ENCODE measurements at regions of chr3 and their contacts with region 1.

Region 1: GRCh38 chr3:184314363-184314699 is at the start of gene EIF4G1:
- DNase-seq: peak; percentile 94
- H3K4me3 ChIP-seq: peak within 1 kb of the TSS; percentile 97
- H3K27ac ChIP-seq: peak within 1 kb of the TSS; percentile 62
- H3K4me1 ChIP-seq: peaks cover 25% of the 10 kb centered on the region
- CTCF ChIP-seq: no peak
- total RNA-seq, gene EIF4G1: 245 and 293 TPM in 2 replicates

Region 2: GRCh38 chr3:184154885-184155643 is 159.3 kb before region 1 on chr3 and contains the start of gene DVL3:
- CTCF ChIA-PET with region 1: no interaction called
- POLR2A ChIA-PET with region 1: no interaction called
- intact Hi-C with region 1: loop called (anchors 5 kb)
- DNase-seq: peak; percentile 74
- H3K4me3 ChIP-seq: peak within 1 kb of the TSS; percentile 92
- H3K27ac ChIP-seq: peak within 1 kb of the TSS; percentile 52
- H3K4me1 ChIP-seq: peaks cover 23% of the 10 kb centered on the region
- CTCF ChIP-seq: no peak
- total RNA-seq, gene DVL3: 38.5 and 41.3 TPM in 2 replicates

Region 3: DNA sequence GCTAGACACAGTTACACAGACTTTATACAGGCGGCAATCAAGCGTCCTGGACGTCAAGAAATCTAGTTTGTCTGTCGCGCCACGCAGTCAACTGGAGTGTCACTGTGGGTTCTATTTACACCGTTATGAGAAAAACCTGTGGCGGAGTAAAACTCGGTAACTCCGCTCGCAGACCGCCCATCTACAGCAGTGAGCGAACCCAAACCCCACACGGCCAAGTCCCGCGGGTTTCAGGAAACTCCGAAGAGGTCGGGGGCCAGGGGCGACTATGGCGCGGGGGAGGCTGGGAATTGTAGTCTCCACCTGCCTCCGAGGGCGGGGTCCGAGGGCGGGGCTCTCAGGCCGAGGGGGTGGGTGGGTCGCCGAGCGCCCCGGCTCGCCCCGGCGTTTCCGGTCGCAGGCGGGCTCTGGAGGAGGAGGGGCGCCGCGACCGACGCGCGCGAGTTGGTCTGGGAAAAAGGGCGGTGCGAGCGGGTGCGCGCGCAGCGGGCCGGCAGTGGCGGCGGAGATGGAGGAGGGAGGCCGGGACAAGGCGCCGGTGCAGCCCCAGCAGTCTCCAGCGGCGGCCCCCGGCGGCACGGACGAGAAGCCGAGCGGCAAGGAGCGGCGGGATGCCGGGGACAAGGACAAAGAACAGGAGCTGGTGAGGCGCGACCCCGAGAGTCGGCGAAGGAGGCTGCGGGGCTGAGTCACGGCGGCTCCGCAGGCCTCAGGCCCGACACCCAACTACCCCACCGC is 15.4 kb before region 1 on chr3 and contains the start of gene PSMD2:
- CTCF ChIA-PET with region 1: no interaction called
- POLR2A ChIA-PET with region 1: interaction called, 3 read pairs
- intact Hi-C with region 1: loop called (anchors 1 kb)
- DNase-seq: peak; percentile 97
- H3K4me3 ChIP-seq: peak within 1 kb of the TSS; percentile 96
- H3K27ac ChIP-seq: peak within 1 kb of the TSS; percentile 24
- H3K4me1 ChIP-seq: peaks cover 12% of the 10 kb centered on the region
- CTCF ChIP-seq: no peak
- total RNA-seq, gene PSMD2: 158 and 205 TPM in 2 replicates

Region 4: GRCh38 chr3:184362668-184363540 is 48.6 kb after region 1 on chr3:
- CTCF ChIA-PET with region 1: no interaction called
- POLR2A ChIA-PET with region 1: interaction called, 3 read pairs
- intact Hi-C with region 1: loop called (anchors 1 kb)
- DNase-seq: peak; percentile 99
- H3K4me3 ChIP-seq: peak overlapping the region; percentile 97
- H3K27ac ChIP-seq: peak overlapping the region; percentile 55
- H3K4me1 ChIP-seq: peaks cover 23% of the 10 kb centered on the region
- CTCF ChIP-seq: peak; percentile 76

Measured in OCI-LY7 (cell line).